Endothelial cell of umbilical vein (primary cell): ENCODE measurements at regions of chr2 and their contacts with region 1.

Region 1: GRCh38 chr2:159953136-159953823 is 109.1 kb downstream of the PLA2R1 start:
- DNase-seq: no peak
- H3K4me3 ChIP-seq: no peak overlapping the region
- H3K27ac ChIP-seq: no peak overlapping the region
- H3K4me1 ChIP-seq: no peaks in the 10 kb centered on the region
- H3K27me3 ChIP-seq: no peaks in the 10 kb centered on the region
- CTCF ChIP-seq: no peak
- POLR2A ChIP-seq: no peak

Region 2: DNA sequence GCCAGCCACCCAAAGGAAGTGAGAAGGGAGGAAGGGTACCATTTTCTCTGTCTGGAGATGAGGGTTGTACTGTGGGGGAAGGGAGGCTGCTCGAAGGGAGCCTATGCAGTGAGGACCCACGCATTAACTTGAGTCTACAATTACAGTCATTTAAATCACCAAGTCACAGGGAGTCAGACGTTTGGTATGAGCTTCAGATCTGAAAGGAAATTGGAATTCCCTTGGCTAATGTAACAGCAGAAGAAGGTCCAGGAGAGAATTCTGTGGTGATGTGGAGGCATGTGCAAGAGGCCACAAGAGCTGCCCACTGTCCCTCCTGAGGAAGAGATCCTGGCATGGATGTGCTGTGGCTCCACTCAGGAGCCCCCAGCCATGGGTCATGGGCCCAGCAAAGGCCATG is 1135.7 kb before region 1 on chr2:
- CTCF ChIA-PET with region 1: no interaction called
- POLR2A ChIA-PET with region 1: interaction called, 11 read pairs
- dilution Hi-C with region 1: no loop called
- intact Hi-C with region 1: no loop called
- DNase-seq: no peak
- H3K4me3 ChIP-seq: no peak overlapping the region
- H3K27ac ChIP-seq: no peak overlapping the region
- H3K4me1 ChIP-seq: no peaks in the 10 kb centered on the region
- H3K27me3 ChIP-seq: peaks cover 10 to 14% of the 10 kb centered on the region in 2 experiments
- CTCF ChIP-seq: no peak
- POLR2A ChIP-seq: no peak

Region 3: DNA sequence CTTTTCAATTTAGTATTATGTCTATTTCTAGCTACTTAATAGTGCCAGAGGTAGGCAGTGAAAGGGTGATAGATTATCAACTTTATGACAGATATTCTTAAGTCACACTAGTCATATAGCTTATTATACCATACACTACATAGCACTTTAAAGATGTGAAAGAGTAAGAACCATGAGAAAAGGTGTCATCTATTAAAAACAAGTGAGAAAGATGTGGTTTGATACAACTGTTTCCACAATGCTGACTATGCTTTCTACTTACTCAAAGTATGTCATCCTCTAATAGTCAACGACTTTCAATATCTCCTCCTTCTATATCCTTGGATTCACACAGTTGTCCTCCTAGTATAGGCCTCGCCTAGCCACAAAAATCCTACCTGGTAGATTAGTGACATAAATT is 533.9 kb before region 1 on chr2:
- CTCF ChIA-PET with region 1: no interaction called
- POLR2A ChIA-PET with region 1: no interaction called
- dilution Hi-C with region 1: no loop called
- intact Hi-C with region 1: no loop called
- DNase-seq: no peak
- H3K4me3 ChIP-seq: no peak overlapping the region
- H3K27ac ChIP-seq: no peak overlapping the region
- H3K4me1 ChIP-seq: no peaks in the 10 kb centered on the region
- H3K27me3 ChIP-seq: no peaks in the 10 kb centered on the region
- CTCF ChIP-seq: no peak
- POLR2A ChIP-seq: no peak

Region 4: GRCh38 chr2:159441182-159441581 is 512.1 kb before region 1 on chr2:
- CTCF ChIA-PET with region 1: no interaction called
- POLR2A ChIA-PET with region 1: no interaction called
- dilution Hi-C with region 1: no loop called
- intact Hi-C with region 1: no loop called
- DNase-seq: no peak
- H3K4me3 ChIP-seq: no peak overlapping the region
- H3K27ac ChIP-seq: no peak overlapping the region
- H3K4me1 ChIP-seq: no peaks in the 10 kb centered on the region
- H3K27me3 ChIP-seq: no peaks in the 10 kb centered on the region
- CTCF ChIP-seq: no peak
- POLR2A ChIP-seq: no peak